Common myeloid progenitor, CD34-positive (primary cell): ENCODE measurements at regions of chr9 and their contacts with region 1.

Region 1: GRCh38 chr9:98241357-98242300 is 13.8 kb downstream of the TBC1D2 start:
- DNase-seq: peak in 1 of 3 donors; percentile 10
- H3K4me3 ChIP-seq: no peak overlapping the region
- H3K27ac ChIP-seq: no peak overlapping the region
- H3K4me1 ChIP-seq: peaks cover 0 to 28% (median 16%) of the 10 kb centered on the region in 4 experiments
- H3K27me3 ChIP-seq: no peaks in the 10 kb centered on the region

Region 2: GRCh38 chr9:98097836-98098235 is 143.8 kb before region 1 on chr9:
- CTCF ChIA-PET with region 1: no interaction called
- POLR2A ChIA-PET with region 1: no interaction called
- DNase-seq: peak in 1 of 3 donors; percentile 15
- H3K4me3 ChIP-seq: no peak overlapping the region
- H3K27ac ChIP-seq: no peak overlapping the region
- H3K4me1 ChIP-seq: peaks cover 17 to 34% (median 31%) of the 10 kb centered on the region in 4 experiments
- H3K27me3 ChIP-seq: no peaks in the 10 kb centered on the region

Region 3: DNA sequence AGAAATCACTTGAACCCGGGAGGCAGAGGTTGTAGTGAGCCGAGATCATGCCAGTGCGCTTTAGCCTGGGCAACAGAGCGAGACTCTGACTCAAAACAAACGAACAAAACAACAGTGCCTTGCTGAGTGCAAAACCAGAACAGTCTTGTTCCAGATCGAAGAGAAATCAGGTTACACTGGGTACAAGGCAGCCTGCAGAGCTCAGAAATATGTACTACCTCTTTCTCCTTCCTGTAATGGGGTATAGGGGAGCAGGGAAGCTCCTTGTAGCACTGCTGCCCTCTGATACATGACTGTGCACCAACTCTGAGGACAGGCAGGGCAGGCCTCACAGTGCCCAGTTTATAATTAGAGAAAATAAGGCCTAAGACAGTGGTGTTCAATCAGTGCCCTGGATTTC is 10.8 kb before region 1 on chr9:
- CTCF ChIA-PET with region 1: interaction called, 12 read pairs
- POLR2A ChIA-PET with region 1: no interaction called
- DNase-seq: no peak
- H3K4me3 ChIP-seq: no peak overlapping the region
- H3K27ac ChIP-seq: no peak overlapping the region
- H3K4me1 ChIP-seq: peaks cover 0 to 2% (median 0%) of the 10 kb centered on the region in 4 experiments
- H3K27me3 ChIP-seq: no peaks in the 10 kb centered on the region

Region 4: DNA sequence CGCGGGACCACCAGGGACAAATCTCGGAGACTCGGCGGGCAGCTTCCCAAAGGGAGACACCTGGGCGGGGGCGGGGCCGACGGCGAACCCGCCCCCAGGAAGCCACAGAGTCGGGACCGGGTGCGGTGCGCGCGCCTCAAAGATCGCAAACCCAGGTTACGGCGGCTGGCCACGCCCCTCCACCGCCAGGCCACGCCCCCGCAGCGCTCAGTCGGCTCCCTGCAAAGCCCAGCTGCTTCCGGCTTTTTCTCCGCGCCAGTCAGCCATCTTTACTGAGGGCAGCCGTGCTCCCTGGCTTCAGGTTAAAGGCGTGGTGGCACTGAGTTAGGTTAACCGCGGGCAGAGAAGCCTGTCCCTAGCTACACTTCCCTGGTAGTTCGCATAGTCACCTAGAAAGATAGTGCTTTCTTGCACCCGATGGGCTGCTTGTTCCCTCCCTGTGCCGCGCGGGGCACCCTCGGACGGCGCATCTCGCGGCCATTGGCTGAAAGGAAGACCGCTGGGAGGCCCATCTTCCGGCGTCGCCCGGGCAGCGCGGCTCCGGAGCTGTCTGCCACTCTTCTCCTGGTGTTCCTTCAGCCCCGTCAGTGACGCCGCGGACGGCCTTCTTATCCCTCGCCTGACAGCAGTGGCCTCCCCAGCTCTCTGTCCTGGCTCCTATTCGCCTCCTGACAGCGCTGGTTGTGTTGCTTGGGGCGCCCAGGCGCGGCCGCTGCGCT is 14.1 kb after region 1 on chr9 and contains the start of gene TBC1D2:
- CTCF ChIA-PET with region 1: interaction called, 19 read pairs
- POLR2A ChIA-PET with region 1: interaction called, 14 read pairs
- DNase-seq: peak; percentile 96 to 98 (median 98)
- H3K4me3 ChIP-seq: peak within 1 kb of the TSS; percentile 87 to 97 (median 94)
- H3K27ac ChIP-seq: peak within 1 kb of the TSS; percentile 66 to 88
- H3K4me1 ChIP-seq: peaks cover 6 to 30% (median 27%) of the 10 kb centered on the region in 4 experiments
- H3K27me3 ChIP-seq: peaks cover 0 to 4% (median 0%) of the 10 kb centered on the region in 5 experiments

Region 5: DNA sequence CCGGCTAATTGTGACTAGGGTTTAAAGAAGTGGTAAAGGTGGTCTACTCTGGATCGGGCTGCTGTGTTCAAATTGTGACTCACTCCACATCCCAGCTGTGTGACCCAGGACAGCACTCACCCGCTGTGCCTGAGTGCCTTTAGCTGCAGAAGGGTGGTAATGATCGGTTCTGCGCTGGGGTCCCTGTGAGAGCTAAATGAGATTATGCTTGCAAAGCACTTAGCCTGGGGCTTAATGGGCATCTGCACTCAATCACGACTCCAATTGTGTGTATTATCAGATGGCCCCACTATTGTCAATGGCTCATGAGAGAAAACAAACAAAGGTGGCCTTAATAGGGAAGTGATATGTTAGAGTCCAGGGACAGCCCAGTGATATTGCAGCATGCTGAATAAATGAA is 38.9 kb after region 1 on chr9:
- CTCF ChIA-PET with region 1: no interaction called
- POLR2A ChIA-PET with region 1: no interaction called
- DNase-seq: no peak
- H3K4me3 ChIP-seq: no peak overlapping the region
- H3K27ac ChIP-seq: no peak overlapping the region
- H3K4me1 ChIP-seq: no peaks in the 10 kb centered on the region
- H3K27me3 ChIP-seq: peaks cover 0 to 4% (median 0%) of the 10 kb centered on the region in 5 experiments